ENCODE measurements at regions of chr1 and their contacts with region 1.

Region 1: GRCh38 chr1:66764994-66765578 is 12.8 kb downstream of the DYNLT5 start:
- DNase-seq: peak in 1 of 2 donors; percentile 25
- ATAC-seq: peak in 1 of 8 donors; percentile 51
- H3K4me3 ChIP-seq: no peak overlapping the region
- H3K27ac ChIP-seq: no peak overlapping the region
- H3K4me1 ChIP-seq: peaks cover 0 to 12% (median 0%) of the 10 kb centered on the region in 9 donors
- H3K27me3 ChIP-seq: no peaks in the 10 kb centered on the region
- CTCF ChIP-seq: peak; percentile 50 to 84 (median 77)

Region 2: DNA sequence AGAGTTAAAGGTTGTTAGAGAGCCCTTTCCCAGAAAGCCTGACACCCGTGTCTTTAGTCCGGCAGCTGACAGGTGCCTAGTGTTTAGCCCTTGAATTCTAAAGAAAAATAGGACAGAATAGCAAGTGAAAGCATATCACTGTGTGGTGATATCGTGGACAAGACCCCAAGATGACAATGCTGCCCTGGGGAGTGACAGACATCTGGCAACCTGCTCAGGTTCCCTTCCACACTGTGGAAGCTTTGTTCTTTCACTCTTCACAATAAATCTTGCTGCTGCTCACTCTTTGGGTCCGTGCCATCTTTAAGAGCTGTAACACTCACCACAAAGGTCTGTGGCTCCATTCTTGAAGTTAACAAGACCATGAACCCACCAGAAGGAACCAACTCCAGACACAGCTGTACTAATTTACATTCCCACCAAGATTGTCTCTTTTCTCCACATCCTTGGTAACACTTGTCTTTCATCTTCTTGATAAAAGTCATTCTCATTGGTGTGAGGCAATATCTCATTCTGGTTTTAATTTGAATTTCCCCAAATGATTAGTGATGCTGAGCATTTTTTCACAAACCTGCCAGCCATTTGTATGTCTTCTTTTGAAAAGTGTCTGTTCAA is 338.7 kb before region 1 on chr1:
- intact Hi-C with region 1: no loop called
- DNase-seq: no peak
- ATAC-seq: no peak
- H3K4me3 ChIP-seq: no peak overlapping the region
- H3K27ac ChIP-seq: no peak overlapping the region
- H3K4me1 ChIP-seq: no peaks in the 10 kb centered on the region
- H3K27me3 ChIP-seq: no peaks in the 10 kb centered on the region
- CTCF ChIP-seq: no peak

Region 3: GRCh38 chr1:66648901-66649595 is 116.0 kb before region 1 on chr1:
- intact Hi-C with region 1: no loop called
- DNase-seq: no peak
- ATAC-seq: no peak
- H3K4me3 ChIP-seq: no peak overlapping the region
- H3K27ac ChIP-seq: no peak overlapping the region
- H3K4me1 ChIP-seq: peaks cover 0 to 6% (median 0%) of the 10 kb centered on the region in 9 donors
- H3K27me3 ChIP-seq: no peaks in the 10 kb centered on the region
- CTCF ChIP-seq: no peak

Region 4: GRCh38 chr1:66890621-66891020 is 125.5 kb after region 1 on chr1:
- intact Hi-C with region 1: loop called in 1 of 10 experiments (anchors 10 kb)
- DNase-seq: no peak
- ATAC-seq: no peak
- H3K4me3 ChIP-seq: no peak overlapping the region
- H3K27ac ChIP-seq: no peak overlapping the region
- H3K4me1 ChIP-seq: no peaks in the 10 kb centered on the region
- H3K27me3 ChIP-seq: no peaks in the 10 kb centered on the region
- CTCF ChIP-seq: no peak

Region 5: DNA sequence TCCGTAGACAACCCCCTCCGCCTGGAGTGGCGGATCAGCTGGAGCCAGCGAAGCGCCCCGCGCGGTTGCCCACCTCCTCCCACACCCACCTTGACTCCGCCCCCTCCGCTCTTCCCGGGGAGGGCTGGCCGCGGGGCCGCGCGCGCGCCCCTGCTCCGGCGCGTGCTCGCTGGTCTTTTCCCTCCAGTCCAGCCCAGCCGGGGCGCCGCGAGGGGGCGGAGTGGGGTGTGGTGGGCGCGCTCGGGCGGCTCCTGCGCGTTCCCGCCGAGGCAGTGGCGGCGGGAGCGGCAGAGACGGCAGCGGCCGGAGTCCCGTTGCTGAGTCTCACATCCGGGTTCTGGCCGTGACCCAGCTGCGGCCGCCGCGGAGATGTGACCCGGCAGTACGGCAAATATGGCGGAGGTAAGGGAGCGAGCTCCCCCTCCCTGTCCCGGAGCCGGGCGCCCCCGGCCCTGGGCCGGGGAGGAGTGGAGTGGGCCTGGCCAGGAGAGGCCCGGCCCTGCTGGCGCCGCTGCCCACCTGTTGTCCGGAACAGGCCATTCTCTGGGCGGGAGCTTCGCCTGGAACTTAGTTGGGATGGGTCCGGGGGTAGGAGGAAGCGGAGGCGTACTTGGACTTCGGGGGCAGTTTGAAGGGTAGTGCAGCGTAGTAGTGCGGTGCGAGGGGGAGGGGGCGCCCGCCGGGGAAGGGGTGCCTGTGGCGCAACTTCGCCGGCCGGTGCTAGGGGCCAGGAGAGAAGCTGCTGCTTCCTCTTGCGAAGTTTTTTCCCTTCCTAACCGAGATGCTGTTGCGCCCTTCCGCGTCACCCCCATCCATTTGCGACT is 165.1 kb after region 1 on chr1:
- intact Hi-C with region 1: loop called in 4 of 10 experiments (anchors 5 to 10 kb)
- DNase-seq: peak; percentile 95 to 97
- ATAC-seq: peak; percentile 83 to 94 (median 88)
- H3K4me3 ChIP-seq: peak overlapping the region; percentile 57 to 86 (median 77)
- H3K27ac ChIP-seq: peak overlapping the region; percentile 90 to 98 (median 95)
- H3K4me1 ChIP-seq: peaks cover 3 to 78% (median 62%) of the 10 kb centered on the region in 9 donors
- H3K27me3 ChIP-seq: no peaks in the 10 kb centered on the region
- CTCF ChIP-seq: peak; percentile 15 to 71 (median 49)

Region 6: DNA sequence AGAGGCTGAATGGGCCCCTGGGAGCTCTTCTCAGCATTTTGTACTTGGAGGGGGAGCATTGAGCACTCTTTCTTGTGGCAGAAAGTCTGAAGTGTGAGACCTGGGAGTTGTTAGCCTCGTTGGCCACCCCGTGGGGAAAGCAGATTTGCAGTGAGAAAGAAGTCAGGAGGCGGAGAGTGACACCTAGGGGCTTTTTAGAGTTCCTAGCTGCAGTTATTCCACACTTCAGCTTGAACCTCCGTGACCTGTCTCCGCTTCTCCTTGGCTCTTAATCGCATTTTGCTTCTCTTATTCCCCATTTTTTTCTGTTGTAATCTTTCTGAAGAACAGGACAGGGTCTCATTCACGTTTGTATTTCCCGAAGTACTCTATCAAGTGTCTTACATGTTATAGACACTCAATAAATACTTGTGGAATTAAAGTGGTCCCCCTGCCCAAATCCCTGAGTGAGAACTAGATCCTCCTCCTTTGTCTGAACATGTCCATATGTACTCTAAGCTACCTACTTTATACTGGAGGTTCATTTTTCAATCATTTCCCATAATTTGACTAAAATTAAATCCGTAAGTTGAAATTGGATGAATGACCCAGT is 384.2 kb after region 1 on chr1:
- intact Hi-C with region 1: loop called (anchors 2 to 10 kb)
- DNase-seq: peak; percentile 22 to 68
- ATAC-seq: peak; percentile 81 to 95 (median 90)
- H3K4me3 ChIP-seq: no peak overlapping the region
- H3K27ac ChIP-seq: no peak overlapping the region
- H3K4me1 ChIP-seq: peaks cover 0 to 10% (median 5%) of the 10 kb centered on the region in 9 donors
- H3K27me3 ChIP-seq: peaks cover 0 to 17% (median 4%) of the 10 kb centered on the region in 7 donors
- CTCF ChIP-seq: peak; percentile 60 to 90 (median 78)

Region 7: DNA sequence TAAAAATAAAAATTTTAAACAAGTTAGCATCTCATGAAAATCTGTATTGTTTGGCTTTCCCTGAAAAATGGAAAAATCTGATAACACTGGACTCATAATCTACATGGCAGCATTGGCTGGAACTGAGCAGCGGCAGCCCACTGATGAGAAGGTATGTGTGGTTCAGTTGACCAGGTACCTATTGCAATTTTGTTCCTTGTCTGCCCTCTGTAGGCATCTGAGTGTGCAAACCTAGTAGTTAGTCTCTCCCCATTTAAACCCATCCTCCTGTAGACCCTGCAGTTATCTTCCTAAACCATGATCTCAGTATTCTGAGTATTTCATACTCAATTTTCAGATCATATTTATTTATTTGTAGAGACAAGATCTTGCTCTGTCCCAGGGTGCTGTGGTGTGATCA is 724.6 kb after region 1 on chr1:
- intact Hi-C with region 1: loop called in 1 of 10 experiments (anchors 10 kb)
- DNase-seq: peak in 1 of 2 donors; percentile 11
- ATAC-seq: peak; percentile 46 to 91 (median 78)
- H3K4me3 ChIP-seq: no peak overlapping the region
- H3K27ac ChIP-seq: no peak overlapping the region
- H3K4me1 ChIP-seq: no peaks in the 10 kb centered on the region
- H3K27me3 ChIP-seq: no peaks in the 10 kb centered on the region
- CTCF ChIP-seq: peak; percentile 17 to 67 (median 50)

Measured in heart right ventricle (tissue), 16 donors.